ENCODE measurements at regions of chr2 and their contacts with region 1.

Region 1: DNA sequence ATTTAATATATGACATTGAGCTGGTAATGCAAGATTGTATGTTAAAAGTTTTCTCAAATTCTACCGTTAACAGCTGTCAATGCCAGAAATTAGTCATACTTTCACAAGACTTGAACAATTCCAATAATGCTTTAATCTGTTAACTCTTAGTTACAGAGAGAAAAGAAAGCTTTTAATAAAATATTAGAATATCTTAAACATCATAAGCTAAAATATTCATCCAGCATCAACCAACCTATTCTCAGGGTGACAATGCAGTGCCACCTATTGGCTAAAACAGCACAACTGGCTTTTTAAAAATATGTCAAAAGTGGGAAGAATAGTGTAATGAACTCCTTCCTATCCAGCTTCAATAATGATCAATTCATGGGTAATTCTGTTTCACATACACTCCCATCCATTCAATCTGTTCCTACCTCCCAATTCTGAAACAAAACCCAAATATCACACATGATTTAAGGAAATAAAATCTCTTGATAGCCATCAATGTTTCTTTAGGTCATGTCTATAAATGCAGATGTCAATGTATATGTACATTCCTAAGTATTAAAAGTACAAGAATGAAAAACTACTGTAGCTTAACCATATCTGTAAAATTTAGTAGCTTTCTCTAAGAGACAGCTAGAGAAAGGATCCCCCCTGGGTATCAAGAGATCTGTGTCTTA is 79.8 kb upstream of the CCDC141 start:
- DNase-seq: no peak
- H3K4me3 ChIP-seq: no peak overlapping the region
- H3K27ac ChIP-seq: no peak overlapping the region
- H3K4me1 ChIP-seq: no peaks in the 10 kb centered on the region
- H3K27me3 ChIP-seq: no peaks in the 10 kb centered on the region
- CTCF ChIP-seq: peak in 2 of 3 experiments; percentile 37 to 49; a peak in 2 of 4 replicates
- EP300 ChIP-seq: no peak
- POLR2A ChIP-seq: no peak
- RAD21 ChIP-seq: peak; percentile 63 to 66

Region 2: GRCh38 chr2:178978667-178979066 is 151.0 kb before region 1 on chr2:
- CTCF ChIA-PET with region 1: no interaction called
- POLR2A ChIA-PET with region 1: no interaction called
- DNase-seq: no peak
- H3K4me3 ChIP-seq: no peak overlapping the region
- H3K27ac ChIP-seq: no peak overlapping the region
- H3K4me1 ChIP-seq: no peaks in the 10 kb centered on the region
- H3K27me3 ChIP-seq: peaks cover 0 to 1% (median 0%) of the 10 kb centered on the region in 4 experiments; a peak in 1 of 7 replicates
- CTCF ChIP-seq: no peak
- EP300 ChIP-seq: no peak
- POLR2A ChIP-seq: no peak
- RAD21 ChIP-seq: no peak

Region 3: DNA sequence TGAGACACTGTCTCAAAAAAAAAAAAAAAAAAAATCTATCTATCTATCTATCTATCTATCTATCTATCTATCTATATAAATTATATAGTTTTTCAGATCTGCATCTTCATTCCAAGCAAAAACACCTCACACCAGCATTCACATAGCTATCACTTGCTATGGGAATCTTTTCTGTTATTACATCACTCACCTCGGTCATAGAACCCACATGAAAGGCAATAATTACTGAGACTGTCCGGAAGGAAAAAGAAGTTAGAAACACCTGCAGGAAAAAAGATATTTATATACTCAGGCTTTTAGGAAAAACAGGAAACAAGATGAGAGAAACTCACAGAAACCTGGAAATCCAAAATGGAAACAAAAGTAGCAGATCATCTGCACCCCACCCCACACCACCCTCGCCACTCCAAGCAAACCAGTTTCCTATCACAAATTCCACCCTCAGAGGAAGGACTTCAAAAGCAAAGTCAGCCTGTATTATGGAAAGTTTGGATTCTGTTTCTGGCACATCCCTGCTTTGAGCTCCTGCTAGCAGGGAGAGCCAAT is 57.8 kb before region 1 on chr2:
- CTCF ChIA-PET with region 1: no interaction called
- POLR2A ChIA-PET with region 1: no interaction called
- DNase-seq: no peak
- H3K4me3 ChIP-seq: no peak overlapping the region
- H3K27ac ChIP-seq: no peak overlapping the region
- H3K4me1 ChIP-seq: no peaks in the 10 kb centered on the region
- H3K27me3 ChIP-seq: no peaks in the 10 kb centered on the region
- CTCF ChIP-seq: no peak
- EP300 ChIP-seq: no peak
- POLR2A ChIP-seq: no peak
- RAD21 ChIP-seq: no peak

Region 4: DNA sequence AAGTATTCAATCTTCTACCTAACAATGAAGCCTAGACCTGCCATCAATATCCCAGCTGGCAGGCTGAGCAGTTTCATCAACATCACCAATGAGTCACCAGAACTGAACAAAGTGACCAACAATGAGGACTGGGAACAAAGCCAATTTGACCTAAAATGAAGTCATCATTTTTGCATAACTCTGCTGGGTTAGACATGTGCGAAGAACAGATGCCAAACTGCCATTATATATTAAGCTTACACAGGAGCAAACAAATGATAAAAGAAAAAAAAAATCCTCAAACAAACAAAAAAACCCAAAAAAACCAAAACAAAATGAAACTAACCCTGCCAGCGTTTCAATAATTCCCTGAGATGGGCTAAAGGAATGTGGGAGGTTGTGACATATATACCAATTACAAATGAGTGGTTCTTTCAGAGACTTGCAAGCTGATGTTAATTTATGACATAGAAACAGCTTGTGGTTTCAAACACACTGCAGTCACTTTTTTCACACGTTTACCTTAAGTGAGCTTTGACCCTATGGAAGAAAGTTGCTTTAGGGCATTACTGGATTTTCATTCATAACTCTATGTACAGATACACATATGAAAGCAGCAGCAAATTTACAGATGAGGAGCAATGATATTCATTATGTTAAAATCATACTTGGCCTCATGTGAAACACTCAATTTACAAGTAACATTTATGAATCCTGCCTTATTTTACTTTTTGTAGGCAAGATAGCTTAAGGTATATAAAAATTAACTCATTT is 22.9 kb before region 1 on chr2:
- CTCF ChIA-PET with region 1: interaction called, 14 read pairs
- POLR2A ChIA-PET with region 1: no interaction called
- DNase-seq: no peak
- H3K4me3 ChIP-seq: no peak overlapping the region
- H3K27ac ChIP-seq: no peak overlapping the region
- H3K4me1 ChIP-seq: 0 out of 7 replicates have a peak, but pooled peaks cover 0 to 1% (median 0%) of the 10 kb centered on the region in 4 experiments
- H3K27me3 ChIP-seq: no peaks in the 10 kb centered on the region
- CTCF ChIP-seq: no peak
- EP300 ChIP-seq: no peak
- POLR2A ChIP-seq: no peak
- RAD21 ChIP-seq: no peak

Region 5: DNA sequence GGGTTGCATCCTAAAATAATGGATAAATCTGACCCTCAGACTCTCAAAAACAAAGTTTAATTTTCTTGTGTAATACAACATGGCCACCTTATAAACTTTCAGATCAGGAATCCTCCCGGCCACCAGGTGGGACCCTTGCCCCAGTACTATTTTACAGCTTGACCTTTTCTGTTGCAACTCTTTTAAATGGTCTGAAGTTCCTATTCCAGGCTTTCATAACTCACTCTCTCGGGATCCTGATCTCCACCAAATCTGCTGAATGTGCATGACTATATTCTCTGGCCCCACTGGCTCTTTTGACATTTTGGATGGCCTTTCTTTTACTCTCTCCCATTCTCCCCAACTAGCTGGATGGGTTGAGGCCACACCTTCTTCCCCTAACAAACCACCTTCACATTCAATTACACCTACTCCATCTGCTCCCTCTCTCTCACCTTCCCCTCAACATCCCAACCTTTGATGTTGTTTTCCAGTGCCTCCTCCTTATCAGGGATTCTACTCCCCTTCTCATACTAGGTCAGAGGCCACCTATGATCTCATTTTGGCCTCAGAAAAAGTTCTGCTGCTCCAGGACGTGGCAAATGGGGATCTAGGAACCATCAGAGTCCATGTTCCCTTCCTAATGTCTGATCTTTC is 64.2 kb after region 1 on chr2:
- CTCF ChIA-PET with region 1: no interaction called
- POLR2A ChIA-PET with region 1: no interaction called
- DNase-seq: no peak
- H3K4me3 ChIP-seq: no peak overlapping the region
- H3K27ac ChIP-seq: no peak overlapping the region
- H3K4me1 ChIP-seq: no peaks in the 10 kb centered on the region
- H3K27me3 ChIP-seq: no peaks in the 10 kb centered on the region
- CTCF ChIP-seq: no peak; a peak in 1 of 4 replicates
- EP300 ChIP-seq: no peak
- POLR2A ChIP-seq: no peak
- RAD21 ChIP-seq: peak; percentile 26 to 34; a peak in 2 of 4 replicates